ENCODE measurements at regions of chr19 and their contacts with region 1.

Region 1: DNA sequence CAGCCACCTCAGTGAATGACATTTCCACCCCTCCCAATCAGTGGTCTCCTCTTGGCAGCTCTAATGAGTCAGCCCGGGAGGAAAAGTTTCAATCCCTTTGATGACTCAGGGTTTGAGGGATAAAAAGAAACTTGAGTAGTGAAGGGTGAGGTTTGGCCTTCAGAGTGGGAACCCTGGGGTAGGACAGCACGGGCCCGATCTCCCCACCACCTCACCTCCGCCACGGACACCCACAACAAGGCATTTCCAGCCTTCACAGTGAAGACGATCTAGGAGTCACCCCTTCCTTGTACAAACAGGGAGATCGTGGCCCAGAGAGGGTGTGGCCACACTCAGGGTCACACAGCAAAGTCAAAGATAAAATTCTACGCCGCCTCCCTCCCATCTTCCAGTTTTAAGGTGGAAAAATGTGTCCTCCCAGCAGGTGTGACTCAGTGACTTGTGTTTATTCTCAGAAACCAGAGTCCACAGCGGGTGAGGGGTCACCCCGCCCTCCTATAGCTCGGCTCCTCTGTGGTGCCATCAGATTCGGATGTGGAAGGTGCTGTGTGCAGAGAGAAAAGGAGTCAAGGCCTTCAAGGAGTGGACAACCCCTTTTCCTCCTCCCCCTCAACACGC is 12.3 kb downstream of the CIB3 start:
- DNase-seq: no peak
- H3K4me3 Mint-ChIP-seq: peak overlapping the region; percentile 4
- H3K27ac Mint-ChIP-seq: peak overlapping the region; percentile 68
- H3K4me1 Mint-ChIP-seq: peaks cover 16% of the 10 kb centered on the region
- H3K27me3 Mint-ChIP-seq: peaks cover 2% of the 10 kb centered on the region

Region 2: GRCh38 chr19:16143399-16144245 is 17.4 kb before region 1 on chr19 and contains the start of gene HSH2D:
- intact Hi-C with region 1: loop called (anchors 1 kb)
- DNase-seq: peak; percentile 78
- H3K4me3 Mint-ChIP-seq: peak within 1 kb of the TSS; percentile 98
- H3K27ac Mint-ChIP-seq: peak within 1 kb of the TSS; percentile 97
- H3K4me1 Mint-ChIP-seq: peaks cover 52% of the 10 kb centered on the region
- H3K27me3 Mint-ChIP-seq: no peaks in the 10 kb centered on the region
- total RNA-seq, gene HSH2D: 32.0 and 35.2 TPM in 2 replicates

Region 3: DNA sequence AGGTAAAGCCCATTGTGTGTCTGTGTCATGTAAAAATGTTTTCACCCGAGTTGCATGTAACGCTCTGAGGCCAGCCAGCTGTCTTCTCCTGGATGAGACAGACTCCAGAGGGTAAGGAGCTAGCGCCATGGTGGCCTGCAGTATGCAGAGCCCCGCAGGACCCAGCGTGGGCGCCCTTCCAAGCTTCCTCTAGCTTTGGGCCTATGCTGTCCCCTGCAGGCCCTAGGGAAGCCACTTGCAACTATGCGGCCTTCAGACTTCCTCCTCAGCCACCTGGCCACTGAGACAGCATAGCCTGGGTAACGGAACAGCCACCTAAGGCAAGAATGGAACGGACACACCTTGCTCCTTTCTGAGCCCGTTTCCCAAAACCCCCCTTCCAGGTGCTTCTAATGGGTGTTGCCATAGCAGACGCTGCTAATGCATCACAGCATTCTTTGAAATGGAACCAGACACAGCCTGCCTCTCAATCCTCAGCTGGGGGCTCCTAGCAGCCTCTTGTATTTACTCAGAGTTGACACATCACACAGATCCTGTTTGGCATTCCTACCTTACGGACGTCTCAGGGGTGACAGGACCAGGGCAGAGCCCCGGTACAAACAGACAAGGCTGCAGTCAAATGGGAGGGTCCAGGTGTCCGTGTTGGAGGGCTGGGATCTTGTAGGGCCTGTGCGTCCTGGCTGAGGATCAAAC is 30.3 kb after region 1 on chr19:
- intact Hi-C with region 1: no loop called
- DNase-seq: no peak
- H3K4me3 Mint-ChIP-seq: no peak overlapping the region
- H3K27ac Mint-ChIP-seq: no peak overlapping the region
- H3K4me1 Mint-ChIP-seq: peaks cover 20% of the 10 kb centered on the region
- H3K27me3 Mint-ChIP-seq: no peaks in the 10 kb centered on the region